PC-3 (cell line): ENCODE measurements at regions of chr3 and their contacts with region 1.

Region 1: DNA sequence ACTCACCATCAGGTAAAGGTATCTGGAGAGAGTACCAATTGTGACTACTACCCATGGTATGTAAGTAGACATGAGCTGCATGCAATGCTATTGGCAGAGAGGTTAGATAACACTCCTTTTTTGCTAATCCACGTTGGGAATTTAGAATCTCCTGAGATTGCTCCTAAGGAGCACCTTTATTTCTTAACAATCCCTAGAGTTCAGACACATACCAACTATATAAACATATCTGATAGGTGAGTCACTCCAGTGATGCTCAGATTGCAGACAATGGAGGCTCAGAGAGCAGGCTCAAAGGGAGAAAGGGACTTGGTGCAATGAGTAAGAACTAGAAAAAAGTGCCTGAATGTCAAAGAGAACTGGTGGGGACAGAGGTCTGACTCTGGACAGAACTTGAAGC is 47.0 kb upstream of the LRRFIP2 start:
- DNase-seq: peak; percentile 98
- ATAC-seq: peak; percentile 97
- H3K4me3 ChIP-seq: no peak overlapping the region
- H3K27ac ChIP-seq: peak overlapping the region; percentile 38
- H3K4me1 ChIP-seq: peaks cover 30% of the 10 kb centered on the region
- H3K27me3 ChIP-seq: no peaks in the 10 kb centered on the region
- CTCF ChIP-seq: no peak

Region 2: GRCh38 chr3:37308247-37308646 is 86.8 kb after region 1 on chr3:
- CTCF ChIA-PET with region 1: interaction called, 14 read pairs
- POLR2A ChIA-PET with region 1: no interaction called
- intact Hi-C with region 1: no loop called
- DNase-seq: peak; percentile 66
- ATAC-seq: peak; percentile 46
- H3K4me3 ChIP-seq: no peak overlapping the region
- H3K27ac ChIP-seq: no peak overlapping the region
- H3K4me1 ChIP-seq: no peaks in the 10 kb centered on the region
- H3K27me3 ChIP-seq: no peaks in the 10 kb centered on the region
- CTCF ChIP-seq: peak; percentile 63